Endothelial cell of umbilical vein (primary cell): ENCODE measurements at regions of chr18 and their contacts with region 1.

Region 1: GRCh38 chr18:48827291-48828193 is 123.2 kb downstream of the SMAD7 start:
- DNase-seq: peak; percentile 70
- H3K4me3 ChIP-seq: no peak overlapping the region
- H3K27ac ChIP-seq: no peak overlapping the region
- H3K4me1 ChIP-seq: peaks cover 29% of the 10 kb centered on the region
- H3K27me3 ChIP-seq: no peaks in the 10 kb centered on the region
- CTCF ChIP-seq: no peak
- POLR2A ChIP-seq: no peak

Region 2: DNA sequence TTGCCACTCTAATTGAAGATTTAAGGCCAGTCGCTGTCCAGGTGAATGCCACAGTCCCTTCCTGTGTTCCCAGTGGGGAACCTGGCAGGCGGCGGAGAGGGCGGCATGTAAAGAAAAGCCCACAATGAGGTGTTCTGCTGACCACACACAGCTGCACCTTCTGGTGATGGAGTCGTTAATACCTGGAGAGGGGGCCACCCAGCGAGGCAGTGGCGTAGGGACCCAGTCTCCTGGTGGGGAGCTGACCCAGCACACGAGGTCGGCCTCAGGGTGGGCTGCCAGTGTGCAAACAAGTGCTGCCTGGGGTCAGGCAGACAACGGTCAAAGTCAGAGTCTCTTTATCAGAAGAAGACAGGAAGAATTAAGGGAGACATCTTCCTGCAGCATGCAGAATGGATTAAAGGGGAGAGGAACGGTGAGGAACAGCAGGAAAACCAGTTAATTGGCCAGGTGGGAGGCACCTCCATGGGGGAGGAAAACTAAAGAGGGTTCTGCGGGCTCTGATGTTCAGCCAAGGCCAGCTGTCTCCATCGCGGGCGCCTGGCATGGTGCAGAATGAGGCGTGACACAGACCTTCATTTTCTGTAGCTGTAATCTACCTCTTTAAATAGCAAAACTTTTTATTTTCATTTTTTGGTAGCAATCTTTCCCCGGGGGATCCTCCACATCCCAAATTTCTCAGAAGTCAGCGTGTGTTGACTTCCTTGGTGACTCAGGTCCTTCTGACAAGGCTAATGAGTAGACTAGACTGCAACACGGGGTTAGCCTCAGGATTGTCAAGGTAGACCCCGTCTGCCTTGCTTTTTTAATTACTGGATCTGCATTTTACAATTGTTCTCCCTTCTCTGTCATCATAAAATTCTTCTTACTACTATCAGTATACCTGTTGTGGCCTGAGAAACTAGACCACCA is 44.9 kb after region 1 on chr18:
- CTCF ChIA-PET with region 1: interaction called, 4 read pairs
- POLR2A ChIA-PET with region 1: no interaction called
- dilution Hi-C with region 1: no loop called
- intact Hi-C with region 1: loop called (anchors 1 kb)
- DNase-seq: no peak
- H3K4me3 ChIP-seq: no peak overlapping the region
- H3K27ac ChIP-seq: peak overlapping the region; percentile 36
- H3K4me1 ChIP-seq: peaks cover 8% of the 10 kb centered on the region
- H3K27me3 ChIP-seq: no peaks in the 10 kb centered on the region
- CTCF ChIP-seq: no peak
- POLR2A ChIP-seq: no peak